ENCODE measurements at regions of chr11 and their contacts with region 1.

Region 1: GRCh38 chr11:119356349-119357031 is 10.0 kb upstream of the MFRP start:
- DNase-seq: peak; percentile 69 to 75 (median 72)
- H3K4me3 ChIP-seq: peak overlapping the region; percentile 59 to 78
- H3K4me3 Mint-ChIP-seq: peak overlapping the region; percentile 86 to 95 (median 91)
- H3K27ac ChIP-seq: peak overlapping the region; percentile 23
- H3K27ac Mint-ChIP-seq: peak overlapping the region in 6 of 7 donors; percentile 75 to 94 (median 92)
- H3K4me1 ChIP-seq: peaks cover 5% of the 10 kb centered on the region
- H3K4me1 Mint-ChIP-seq: peaks cover 3 to 11% (median 6%) of the 10 kb centered on the region in 4 donors
- H3K27me3 ChIP-seq: no peaks in the 10 kb centered on the region
- H3K27me3 Mint-ChIP-seq: peaks cover 7 to 8% of the 10 kb centered on the region in 2 donors

Region 2: DNA sequence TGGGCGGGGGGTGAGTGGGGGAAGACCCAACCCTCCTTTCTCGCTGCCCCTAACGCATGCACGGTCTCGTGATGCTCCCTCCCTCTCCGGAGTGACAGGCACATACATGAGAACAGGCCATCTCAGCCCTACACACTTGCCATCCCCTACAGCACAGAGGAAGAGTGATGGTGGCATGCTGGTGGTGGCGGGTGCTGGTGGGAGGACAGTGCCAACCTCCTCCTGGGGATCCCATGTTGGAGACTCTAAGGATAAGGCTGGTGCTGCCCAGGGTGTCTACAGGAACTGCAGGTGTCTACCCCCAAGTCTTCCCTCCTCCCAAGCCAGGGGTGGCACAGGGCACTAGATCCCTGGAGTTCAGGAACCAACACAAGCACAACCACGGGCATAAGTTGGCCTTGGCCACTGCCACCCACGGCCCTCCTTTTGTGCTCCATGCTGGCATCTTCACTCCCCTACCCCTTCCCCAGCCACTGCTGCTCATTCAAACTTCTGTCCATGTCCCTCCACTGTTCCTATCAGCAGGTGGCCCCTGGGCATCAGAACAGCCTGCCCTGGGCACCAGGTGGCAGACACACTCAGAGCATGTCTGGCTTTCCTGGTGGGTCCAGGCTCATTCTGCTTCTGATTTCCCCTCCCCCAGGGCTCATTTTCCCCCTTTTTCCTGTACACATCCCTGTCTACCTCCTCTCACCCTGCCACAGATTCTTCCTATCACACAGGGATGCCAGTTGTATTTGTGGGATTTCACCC is 194.4 kb before region 1 on chr11:
- CTCF ChIA-PET with region 1: no interaction called
- POLR2A ChIA-PET with region 1: no interaction called
- intact Hi-C with region 1: no loop called
- DNase-seq: no peak
- H3K4me3 ChIP-seq: no peak overlapping the region
- H3K4me3 Mint-ChIP-seq: no peak overlapping the region
- H3K27ac ChIP-seq: no peak overlapping the region
- H3K27ac Mint-ChIP-seq: no peak overlapping the region
- H3K4me1 ChIP-seq: no peaks in the 10 kb centered on the region
- H3K4me1 Mint-ChIP-seq: no peaks in the 10 kb centered on the region
- H3K27me3 ChIP-seq: no peaks in the 10 kb centered on the region
- H3K27me3 Mint-ChIP-seq: no peaks in the 10 kb centered on the region

Region 3: DNA sequence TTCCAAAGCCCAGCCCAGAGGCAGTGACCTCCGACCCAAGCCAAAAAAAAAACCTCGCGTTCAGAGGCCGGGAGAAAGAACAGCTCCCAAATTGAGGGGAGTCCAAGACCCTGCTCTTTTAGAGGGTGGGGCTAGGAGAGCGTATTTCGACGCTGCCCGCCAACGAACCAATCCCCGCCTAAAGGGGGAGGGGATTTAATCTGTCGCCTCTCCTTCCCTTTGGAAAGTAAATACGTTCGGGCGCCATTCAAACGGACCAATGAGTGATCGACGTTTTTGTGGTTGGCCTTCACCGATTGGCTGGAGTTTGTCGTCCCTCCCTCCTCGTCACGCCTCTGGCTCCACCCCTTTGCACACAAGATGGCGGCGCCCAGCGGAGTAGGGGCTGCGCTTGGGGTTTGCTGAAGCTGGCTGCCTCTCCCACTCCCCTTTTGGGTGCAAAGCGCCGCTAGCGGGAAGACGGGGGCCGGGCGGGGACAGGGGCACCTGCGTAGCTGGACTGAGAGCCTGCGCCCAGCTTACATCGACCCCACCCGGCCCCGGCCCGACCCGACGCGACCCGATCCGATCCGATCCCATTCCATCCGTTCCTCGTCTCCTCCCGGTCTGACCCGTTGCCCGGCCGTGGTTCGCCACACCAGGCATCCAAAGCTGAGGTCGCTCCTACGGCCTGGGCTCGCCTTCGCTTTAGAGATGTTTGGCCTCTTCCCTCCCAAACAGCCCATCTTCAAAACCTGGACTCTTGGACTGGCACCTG is 22.1 kb before region 1 on chr11 and contains the start of gene RNF26:
- CTCF ChIA-PET with region 1: interaction called, 18 read pairs
- POLR2A ChIA-PET with region 1: no interaction called
- intact Hi-C with region 1: no loop called
- DNase-seq: peak; percentile 93 to 96 (median 94)
- H3K4me3 ChIP-seq: peak within 1 kb of the TSS; percentile 86 to 91
- H3K4me3 Mint-ChIP-seq: peak within 1 kb of the TSS; percentile 97 to 99 (median 98)
- H3K27ac ChIP-seq: peak within 1 kb of the TSS; percentile 70
- H3K27ac Mint-ChIP-seq: peak within 1 kb of the TSS; percentile 92 to 98 (median 98)
- H3K4me1 ChIP-seq: peaks cover 27% of the 10 kb centered on the region
- H3K4me1 Mint-ChIP-seq: peaks cover 12 to 56% (median 36%) of the 10 kb centered on the region in 4 donors
- H3K27me3 ChIP-seq: peaks cover 5% of the 10 kb centered on the region
- H3K27me3 Mint-ChIP-seq: peaks cover 10% of the 10 kb centered on the region in 2 donors
- total RNA-seq, gene RNF26: 17.5 to 18.3 TPM

Region 4: GRCh38 chr11:119373921-119374631 is 17.6 kb after region 1 on chr11:
- CTCF ChIA-PET with region 1: interaction called, 179 read pairs
- POLR2A ChIA-PET with region 1: no interaction called
- intact Hi-C with region 1: loop called (anchors 1 kb)
- DNase-seq: peak in 3 of 5 donors; percentile 28 to 41 (median 33)
- H3K4me3 ChIP-seq: no peak overlapping the region
- H3K4me3 Mint-ChIP-seq: peak overlapping the region in 1 of 8 donors; percentile 23
- H3K27ac ChIP-seq: no peak overlapping the region
- H3K27ac Mint-ChIP-seq: peak overlapping the region in 3 of 7 donors; percentile 29 to 43 (median 29)
- H3K4me1 ChIP-seq: peaks cover 24% of the 10 kb centered on the region
- H3K4me1 Mint-ChIP-seq: peaks cover 7 to 20% (median 13%) of the 10 kb centered on the region in 4 donors
- H3K27me3 ChIP-seq: no peaks in the 10 kb centered on the region
- H3K27me3 Mint-ChIP-seq: peaks cover 0 to 12% of the 10 kb centered on the region in 2 donors

Region 5: DNA sequence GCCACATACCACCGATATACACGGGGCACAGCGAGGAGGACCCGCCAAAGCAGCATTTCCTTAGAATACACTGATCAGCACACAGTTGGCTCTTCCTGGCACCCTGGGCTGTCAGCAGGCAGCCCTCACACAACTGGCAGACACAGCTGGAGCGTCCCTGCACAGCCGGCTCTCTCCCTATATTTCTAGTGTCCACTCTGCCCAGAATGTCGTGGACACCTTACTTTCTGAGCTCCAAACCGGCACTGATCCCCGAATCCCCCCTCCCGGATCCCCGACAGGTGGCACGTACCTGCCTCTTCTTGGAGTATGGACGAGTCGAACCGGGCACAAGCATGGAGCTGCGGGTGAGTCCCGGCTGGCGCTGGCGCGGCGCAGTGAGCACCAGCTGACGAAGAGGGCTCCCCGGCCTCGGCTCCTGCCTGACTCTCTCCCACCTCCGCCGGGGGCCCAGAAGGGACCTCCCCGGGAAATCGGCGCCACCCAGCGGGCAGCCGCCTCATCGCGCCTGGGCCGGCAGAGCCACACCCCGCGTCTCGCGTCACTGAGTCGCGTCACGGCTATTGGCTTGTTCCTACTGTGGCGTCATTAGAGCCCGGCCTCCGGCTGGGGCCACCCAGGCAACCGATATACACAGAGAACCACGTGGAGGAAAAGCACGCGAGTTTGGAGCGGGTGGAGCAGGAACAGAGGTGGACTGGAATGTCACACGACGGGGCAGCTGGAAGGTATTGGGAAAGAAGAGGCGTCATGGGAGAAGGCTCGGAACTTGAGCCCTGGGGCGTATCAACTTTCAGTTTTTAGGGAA is 24.9 kb after region 1 on chr11 and contains the start of gene USP2:
- CTCF ChIA-PET with region 1: interaction called, 179 read pairs
- POLR2A ChIA-PET with region 1: interaction called, 16 read pairs
- intact Hi-C with region 1: loop called (anchors 1 kb)
- DNase-seq: peak; percentile 96 to 98 (median 97)
- H3K4me3 ChIP-seq: peak within 1 kb of the TSS; percentile 77 to 86
- H3K4me3 Mint-ChIP-seq: no peak within 1 kb of the TSS
- H3K27ac ChIP-seq: peak within 1 kb of the TSS; percentile 49
- H3K27ac Mint-ChIP-seq: peak within 1 kb of the TSS in 3 of 7 donors; percentile 75 to 87 (median 87)
- H3K4me1 ChIP-seq: peaks cover 17% of the 10 kb centered on the region
- H3K4me1 Mint-ChIP-seq: peaks cover 0 to 9% (median 6%) of the 10 kb centered on the region in 4 donors
- H3K27me3 ChIP-seq: no peaks in the 10 kb centered on the region
- H3K27me3 Mint-ChIP-seq: peaks cover 0 to 3% of the 10 kb centered on the region in 2 donors
- total RNA-seq, gene USP2: 0.17 to 0.22 TPM

Region 6: GRCh38 chr11:119474682-119475596 is 118.4 kb after region 1 on chr11:
- CTCF ChIA-PET with region 1: interaction called, 32 read pairs
- POLR2A ChIA-PET with region 1: no interaction called
- intact Hi-C with region 1: no loop called
- DNase-seq: peak; percentile 38 to 55 (median 39)
- H3K4me3 ChIP-seq: no peak overlapping the region
- H3K4me3 Mint-ChIP-seq: no peak overlapping the region
- H3K27ac ChIP-seq: no peak overlapping the region
- H3K27ac Mint-ChIP-seq: no peak overlapping the region
- H3K4me1 ChIP-seq: no peaks in the 10 kb centered on the region
- H3K4me1 Mint-ChIP-seq: no peaks in the 10 kb centered on the region
- H3K27me3 ChIP-seq: no peaks in the 10 kb centered on the region
- H3K27me3 Mint-ChIP-seq: peaks cover 25 to 36% of the 10 kb centered on the region in 2 donors

Region 7: DNA sequence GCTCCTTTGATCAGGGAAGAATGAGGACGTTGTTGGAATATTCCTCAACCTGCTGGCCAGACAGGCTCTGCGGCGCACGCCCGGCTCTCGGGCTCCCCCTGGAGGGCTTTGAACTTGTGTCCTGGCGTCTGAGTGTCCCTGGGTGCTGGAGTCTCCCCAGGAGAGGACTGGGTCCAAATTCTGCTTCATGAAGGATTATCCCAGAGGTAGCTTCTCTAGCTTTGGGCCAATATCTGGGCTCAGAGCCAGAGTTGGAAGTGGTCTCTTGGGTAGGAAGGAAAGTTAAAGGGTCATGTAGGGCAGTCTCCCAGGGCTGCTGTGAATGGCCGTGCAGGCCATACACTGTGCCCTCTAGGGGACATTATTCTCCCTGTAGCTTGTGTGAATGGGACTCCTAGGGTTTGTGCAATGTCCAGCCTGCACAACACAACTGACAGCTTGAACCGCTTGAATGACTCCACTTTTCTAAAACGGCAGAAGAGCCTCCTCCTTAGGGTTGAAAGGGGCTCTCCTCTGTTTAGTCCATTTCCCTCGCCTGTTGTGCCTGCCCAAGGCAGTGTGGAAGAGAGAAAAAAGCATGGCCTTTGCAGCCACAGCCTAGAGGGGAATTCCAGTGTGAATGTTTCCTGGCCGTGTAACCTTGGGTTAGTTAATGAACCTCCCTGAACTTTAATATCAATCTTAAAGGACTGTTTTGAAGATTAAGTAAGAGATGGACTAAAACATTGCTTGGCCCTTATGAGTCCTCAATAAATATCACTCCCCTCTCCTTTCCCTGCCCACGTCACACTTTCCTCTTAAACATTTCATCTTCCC is 177.6 kb after region 1 on chr11:
- CTCF ChIA-PET with region 1: no interaction called
- POLR2A ChIA-PET with region 1: no interaction called
- intact Hi-C with region 1: loop called (anchors 1 kb)
- DNase-seq: peak in 3 of 5 donors; percentile 14 to 30 (median 16)
- H3K4me3 ChIP-seq: no peak overlapping the region
- H3K4me3 Mint-ChIP-seq: no peak overlapping the region
- H3K27ac ChIP-seq: no peak overlapping the region
- H3K27ac Mint-ChIP-seq: no peak overlapping the region
- H3K4me1 ChIP-seq: no peaks in the 10 kb centered on the region
- H3K4me1 Mint-ChIP-seq: peaks cover 0 to 2% (median 0%) of the 10 kb centered on the region in 4 donors
- H3K27me3 ChIP-seq: no peaks in the 10 kb centered on the region
- H3K27me3 Mint-ChIP-seq: peaks cover 0 to 21% of the 10 kb centered on the region in 2 donors

Measured in CD4-positive, alpha-beta memory T cell (primary cell).